Heart right ventricle (tissue), 16 donors: ENCODE measurements at regions of chr20 and their contacts with region 1.

Region 1: GRCh38 chr20:6940046-6940445 is 172.6 kb downstream of the BMP2 start:
- DNase-seq: peak in 1 of 2 donors; percentile 4
- ATAC-seq: no peak
- H3K4me3 ChIP-seq: no peak overlapping the region
- H3K27ac ChIP-seq: no peak overlapping the region
- H3K4me1 ChIP-seq: no peaks in the 10 kb centered on the region
- H3K27me3 ChIP-seq: no peaks in the 10 kb centered on the region
- CTCF ChIP-seq: peak in 6 of 9 donors; percentile 7 to 40 (median 18)

Region 2: GRCh38 chr20:6976530-6976929 is 36.5 kb after region 1 on chr20:
- intact Hi-C with region 1: loop called in 1 of 10 experiments (anchors 1 kb)
- DNase-seq: no peak
- ATAC-seq: no peak
- H3K4me3 ChIP-seq: no peak overlapping the region
- H3K27ac ChIP-seq: no peak overlapping the region
- H3K4me1 ChIP-seq: no peaks in the 10 kb centered on the region
- H3K27me3 ChIP-seq: no peaks in the 10 kb centered on the region
- CTCF ChIP-seq: no peak